Naive thymus-derived CD4-positive, alpha-beta T cell (primary cell): ENCODE measurements at regions of chr19 and their contacts with region 1.

Region 1: DNA sequence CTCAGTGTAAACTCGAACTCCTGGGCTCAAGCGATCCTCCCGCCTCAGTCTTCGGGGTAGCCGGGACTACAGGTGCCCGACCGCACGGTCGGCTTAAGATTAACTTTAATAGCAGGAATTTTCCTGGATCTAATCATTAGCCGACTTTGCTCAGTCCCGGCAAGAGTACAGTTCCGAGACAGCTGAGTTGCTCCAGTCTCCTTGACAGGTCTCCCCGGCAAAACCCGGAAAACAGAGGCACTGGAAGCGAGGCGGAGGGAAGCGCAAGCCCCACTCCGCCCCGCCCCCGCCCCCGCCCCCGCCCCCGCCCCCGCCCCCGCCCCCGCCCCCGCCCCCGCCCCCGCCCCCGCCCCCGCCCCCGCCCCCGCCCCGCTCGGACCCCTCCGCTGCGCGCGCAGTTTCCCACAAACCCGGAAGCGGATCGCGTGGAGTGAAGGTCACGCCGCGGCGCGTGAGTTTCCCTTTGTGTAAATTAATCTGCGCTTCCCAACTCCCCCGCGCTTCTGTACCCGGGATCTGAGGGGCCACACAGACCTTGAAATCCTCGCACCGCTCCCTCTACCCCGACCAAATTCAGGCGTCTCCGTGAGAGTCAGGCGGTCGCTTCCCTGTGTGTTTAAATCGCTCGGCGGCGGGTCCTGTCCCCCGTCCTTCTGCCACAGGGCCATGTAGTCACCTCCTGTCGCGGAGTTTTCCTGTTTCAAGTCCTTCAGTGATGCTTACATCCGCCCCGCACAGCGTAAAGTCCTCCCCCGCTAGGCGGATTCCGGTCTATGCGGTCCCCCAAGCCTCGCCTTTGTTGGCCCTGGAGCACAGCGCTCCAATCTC is at the start of gene ZNF480:
- DNase-seq: peak; percentile 67 to 91 (median 87)
- ATAC-seq: peak; percentile 89
- H3K4me3 ChIP-seq: peak within 1 kb of the TSS; percentile 85
- H3K4me3 Mint-ChIP-seq: peak within 1 kb of the TSS; percentile 89 to 99 (median 98)
- H3K27ac ChIP-seq: peak within 1 kb of the TSS; percentile 97
- H3K27ac Mint-ChIP-seq: peak within 1 kb of the TSS; percentile 95 to 99 (median 98)
- H3K4me1 ChIP-seq: peaks cover 4 to 5% of the 10 kb centered on the region in 2 donors
- H3K4me1 Mint-ChIP-seq: peaks cover 15 to 32% (median 19%) of the 10 kb centered on the region in 7 donors
- H3K27me3 ChIP-seq: no peaks in the 10 kb centered on the region
- H3K27me3 Mint-ChIP-seq: peaks cover 0 to 3% (median 0%) of the 10 kb centered on the region in 5 donors
- total RNA-seq, gene ZNF480: 8.5 to 28.9 (median 13.3) TPM

Region 2: GRCh38 chr19:52336117-52336790 is 39.3 kb after region 1 on chr19 and contains the start of gene ZNF610:
- CTCF ChIA-PET with region 1: no interaction called
- POLR2A ChIA-PET with region 1: no interaction called
- intact Hi-C with region 1: loop called in 1 of 2 experiments (anchors 1 kb)
- DNase-seq: peak; percentile 73 to 88 (median 85)
- ATAC-seq: peak; percentile 99
- H3K4me3 ChIP-seq: peak within 1 kb of the TSS; percentile 88
- H3K4me3 Mint-ChIP-seq: peak within 1 kb of the TSS; percentile 87 to 97 (median 93)
- H3K27ac ChIP-seq: peak within 1 kb of the TSS; percentile 83
- H3K27ac Mint-ChIP-seq: peak within 1 kb of the TSS; percentile 81 to 98 (median 96)
- H3K4me1 ChIP-seq: peaks cover 0 to 6% of the 10 kb centered on the region in 2 donors
- H3K4me1 Mint-ChIP-seq: peaks cover 11 to 19% (median 16%) of the 10 kb centered on the region in 7 donors
- H3K27me3 ChIP-seq: no peaks in the 10 kb centered on the region
- H3K27me3 Mint-ChIP-seq: no peaks in the 10 kb centered on the region
- total RNA-seq, gene ZNF610: 0.42 to 4.3 (median 0.93) TPM

Region 3: GRCh38 chr19:52535771-52536447 is 238.9 kb after region 1 on chr19:
- CTCF ChIA-PET with region 1: no interaction called
- POLR2A ChIA-PET with region 1: no interaction called
- intact Hi-C with region 1: loop called in 1 of 2 experiments (anchors 2 kb)
- DNase-seq: peak; percentile 60 to 87 (median 82)
- ATAC-seq: peak; percentile 99
- H3K4me3 ChIP-seq: peak overlapping the region; percentile 84
- H3K4me3 Mint-ChIP-seq: peak overlapping the region; percentile 83 to 99 (median 90)
- H3K27ac ChIP-seq: peak overlapping the region; percentile 87
- H3K27ac Mint-ChIP-seq: peak overlapping the region; percentile 69 to 95 (median 87)
- H3K4me1 ChIP-seq: no peaks in the 10 kb centered on the region
- H3K4me1 Mint-ChIP-seq: peaks cover 16 to 44% (median 34%) of the 10 kb centered on the region in 7 donors
- H3K27me3 ChIP-seq: no peaks in the 10 kb centered on the region
- H3K27me3 Mint-ChIP-seq: no peaks in the 10 kb centered on the region

Region 4: GRCh38 chr19:52748336-52748950 is 451.5 kb after region 1 on chr19:
- CTCF ChIA-PET with region 1: no interaction called
- POLR2A ChIA-PET with region 1: no interaction called
- intact Hi-C with region 1: loop called in 1 of 2 experiments (anchors 2 kb)
- DNase-seq: peak in 7 of 9 donors; percentile 18 to 43 (median 35)
- ATAC-seq: no peak
- H3K4me3 ChIP-seq: no peak overlapping the region
- H3K4me3 Mint-ChIP-seq: no peak overlapping the region
- H3K27ac ChIP-seq: no peak overlapping the region
- H3K27ac Mint-ChIP-seq: no peak overlapping the region
- H3K4me1 ChIP-seq: no peaks in the 10 kb centered on the region
- H3K4me1 Mint-ChIP-seq: peaks cover 0 to 13% (median 6%) of the 10 kb centered on the region in 7 donors
- H3K27me3 ChIP-seq: no peaks in the 10 kb centered on the region
- H3K27me3 Mint-ChIP-seq: no peaks in the 10 kb centered on the region

Region 5: GRCh38 chr19:53086949-53087348 is 790.0 kb after region 1 on chr19:
- CTCF ChIA-PET with region 1: no interaction called
- POLR2A ChIA-PET with region 1: no interaction called
- intact Hi-C with region 1: no loop called
- DNase-seq: no peak
- ATAC-seq: no peak
- H3K4me3 ChIP-seq: no peak overlapping the region
- H3K4me3 Mint-ChIP-seq: no peak overlapping the region
- H3K27ac ChIP-seq: no peak overlapping the region
- H3K27ac Mint-ChIP-seq: peak overlapping the region in 3 of 9 donors; percentile 8 to 65 (median 32)
- H3K4me1 ChIP-seq: no peaks in the 10 kb centered on the region
- H3K4me1 Mint-ChIP-seq: peaks cover 3 to 7% (median 4%) of the 10 kb centered on the region in 7 donors
- H3K27me3 ChIP-seq: no peaks in the 10 kb centered on the region
- H3K27me3 Mint-ChIP-seq: no peaks in the 10 kb centered on the region